GM12878 (cell line): ENCODE measurements at regions of chr12 and their contacts with region 1.

Region 1: GRCh38 chr12:49232940-49233841 is 31.7 kb upstream of the TUBA1C start:
- DNase-seq: no peak
- ATAC-seq: no peak
- H3K4me3 ChIP-seq: peak overlapping the region; percentile 4; the same call in 1 of the 2 replicates
- H3K27ac ChIP-seq: no peak overlapping the region
- H3K4me1 ChIP-seq: peaks cover 3% of the 10 kb centered on the region; the same call in 1 of the 2 replicates
- H3K27me3 ChIP-seq: no peaks in the 10 kb centered on the region
- CTCF ChIP-seq: no peak
- EP300 ChIP-seq: no peak
- POLR2A ChIP-seq: no peak
- RAD21 ChIP-seq: no peak

Region 2: DNA sequence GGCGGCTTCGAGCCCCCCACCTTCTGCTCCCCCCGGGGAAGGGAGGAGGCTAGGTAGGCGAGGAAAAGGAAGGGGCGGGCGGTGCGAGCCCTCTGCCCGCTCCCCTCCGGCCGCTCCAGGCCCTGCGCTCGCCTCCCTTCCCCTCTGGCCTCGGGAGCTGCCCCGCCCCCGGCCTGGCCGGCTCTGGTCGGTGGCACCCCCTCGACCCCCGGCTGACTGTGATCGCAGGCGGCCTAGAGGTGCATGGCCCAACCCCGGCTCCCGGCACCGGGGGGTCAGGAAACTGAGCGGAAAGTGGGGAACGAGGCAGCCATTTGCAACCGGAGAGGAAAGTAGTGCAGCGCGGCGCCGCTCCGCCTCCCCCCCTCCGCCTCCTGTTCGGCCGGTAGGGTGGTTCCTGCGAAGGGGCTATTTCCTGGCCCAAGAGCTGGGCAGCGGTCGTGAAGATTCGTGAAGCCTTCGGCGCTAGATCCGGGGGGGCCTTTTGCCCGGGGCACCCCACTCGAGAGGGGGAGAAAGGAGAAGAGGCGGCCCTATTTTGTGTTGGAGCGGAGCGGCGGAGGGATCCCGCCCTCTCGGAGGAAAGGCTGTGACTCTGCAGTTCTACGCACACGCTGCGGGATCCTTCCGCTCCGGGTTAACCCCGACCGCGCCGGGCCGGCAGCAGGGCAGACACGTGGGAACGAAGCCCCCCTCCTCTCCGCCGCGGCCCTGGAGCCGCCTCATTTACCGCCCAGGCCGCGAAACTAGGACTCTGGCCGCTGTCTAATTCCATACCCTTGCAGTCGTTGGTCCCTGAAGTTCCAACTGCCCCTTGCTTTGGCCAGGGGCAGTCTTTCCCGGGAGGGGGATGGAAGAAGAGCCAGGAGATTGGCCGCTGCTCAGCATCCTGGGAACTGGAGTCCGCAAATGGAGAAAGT is 172.7 kb before region 1 on chr12 and contains the start of gene KMT2D:
- CTCF ChIA-PET with region 1: interaction called, 17 read pairs
- POLR2A ChIA-PET with region 1: interaction called, 6 read pairs
- RAD21 ChIA-PET with region 1: interaction called, 6 read pairs
- SMC1A ChIA-PET with region 1: interaction called, 8 read pairs
- in situ Hi-C with region 1: loop called (anchors 10 kb)
- intact Hi-C with region 1: loop called (anchors 1 kb)
- DNase-seq: peak; percentile 59
- ATAC-seq: peak; percentile 78
- H3K4me3 ChIP-seq: peak within 1 kb of the TSS; percentile 99
- H3K27ac ChIP-seq: peak within 1 kb of the TSS; percentile 99
- H3K4me1 ChIP-seq: peaks cover 6% of the 10 kb centered on the region
- H3K27me3 ChIP-seq: no peaks in the 10 kb centered on the region
- CTCF ChIP-seq: peak in 1 of 3 experiments; percentile 28; a peak in 1 of 6 replicates
- EP300 ChIP-seq: peak in 1 of 2 experiments; percentile 66; a peak in 1 of 4 replicates
- POLR2A ChIP-seq: peak; percentile 80
- RAD21 ChIP-seq: no peak
- polyA plus RNA-seq, gene KMT2D: 0.51 to 1.2 TPM

Region 3: DNA sequence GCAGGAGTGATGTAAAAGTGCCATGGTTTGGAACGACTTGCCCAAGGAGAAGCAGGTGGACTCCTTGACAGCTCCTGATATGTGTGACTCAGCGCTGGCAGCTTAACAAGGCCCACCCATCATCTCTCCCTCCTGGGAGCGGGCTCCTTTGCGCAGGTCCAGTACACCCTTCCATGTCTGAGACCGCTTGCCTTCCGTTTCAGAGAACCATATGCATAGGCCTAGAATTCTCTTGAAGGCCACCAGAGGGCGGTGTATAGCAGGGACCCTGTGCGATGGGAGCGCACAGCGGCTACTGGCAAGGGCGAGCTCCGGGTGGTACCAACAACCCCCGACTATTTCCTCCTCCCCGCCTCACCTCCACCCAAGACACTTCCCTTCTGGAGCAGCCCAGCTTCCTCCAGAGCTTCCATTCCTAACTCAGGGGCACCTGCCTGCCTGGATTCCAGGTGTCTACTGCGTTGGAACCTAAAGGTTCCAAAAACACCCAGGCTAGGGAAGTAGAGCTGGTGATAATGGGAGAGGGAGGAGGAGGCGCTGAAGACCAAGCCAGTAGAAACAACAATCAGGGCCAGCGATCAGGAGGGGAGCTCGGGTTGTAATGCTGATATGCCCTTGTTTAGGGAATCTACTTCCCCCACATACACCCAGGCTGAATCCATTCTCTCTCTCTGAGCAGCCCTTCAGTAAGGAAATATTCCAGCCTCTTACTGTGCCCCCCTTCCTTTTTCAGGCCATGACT is 144.8 kb before region 1 on chr12:
- CTCF ChIA-PET with region 1: interaction called, 47 read pairs
- POLR2A ChIA-PET with region 1: interaction called, 6 read pairs
- RAD21 ChIA-PET with region 1: interaction called, 11 read pairs
- SMC1A ChIA-PET with region 1: interaction called, 17 read pairs
- in situ Hi-C with region 1: no loop called
- intact Hi-C with region 1: loop called (anchors 1 kb)
- DNase-seq: peak; percentile 44
- ATAC-seq: peak; percentile 96
- H3K4me3 ChIP-seq: 0 out of 2 replicates have a peak overlapping the region, but pooled peaks have one; percentile 5
- H3K27ac ChIP-seq: no peak overlapping the region
- H3K4me1 ChIP-seq: peaks cover 3% of the 10 kb centered on the region; the same call in 1 of the 2 replicates
- H3K27me3 ChIP-seq: peaks cover 27 to 35% of the 10 kb centered on the region in 2 experiments; a peak in 3 of 4 replicates
- CTCF ChIP-seq: peak; percentile 92 to 95 (median 94)
- EP300 ChIP-seq: no peak
- POLR2A ChIP-seq: peak; percentile 31; the same call in 1 of the 2 replicates
- RAD21 ChIP-seq: peak; percentile 76

Region 4: DNA sequence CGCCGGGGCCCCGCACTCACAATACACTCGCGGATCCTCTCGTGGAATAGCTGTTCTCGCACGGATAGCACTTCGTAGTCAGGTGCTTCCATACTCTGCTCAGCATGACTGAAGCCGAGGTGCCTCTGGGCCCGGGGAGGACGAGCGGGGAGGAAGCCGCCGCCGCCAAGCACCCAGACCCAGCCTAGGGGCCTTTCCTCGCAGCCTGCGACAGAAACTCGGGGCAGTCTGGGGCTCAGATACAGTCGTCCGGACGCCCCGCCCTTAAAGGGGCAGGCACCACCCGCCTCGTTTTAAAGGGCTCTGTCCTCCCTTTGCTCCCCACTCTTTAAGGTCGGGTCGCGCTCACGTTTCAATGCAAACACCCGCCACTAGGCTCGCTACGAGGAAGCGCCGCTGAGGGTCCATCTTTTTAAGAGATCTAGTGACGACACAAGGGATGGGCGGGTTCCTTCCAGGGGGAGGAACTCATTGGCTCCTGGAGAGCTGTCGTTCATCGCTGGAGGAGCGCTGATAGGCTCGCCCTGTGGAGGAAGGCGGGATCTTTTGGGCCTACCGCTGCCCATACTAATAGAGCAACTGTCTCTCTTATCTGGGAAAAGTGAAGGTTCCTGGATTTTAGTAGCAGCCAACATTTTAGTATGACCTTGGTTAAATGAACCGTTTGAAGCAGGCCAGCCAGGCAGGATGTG is 122.6 kb before region 1 on chr12 and contains the start of gene LMBR1L:
- CTCF ChIA-PET with region 1: interaction called, 13 read pairs
- POLR2A ChIA-PET with region 1: no interaction called
- RAD21 ChIA-PET with region 1: interaction called, 5 read pairs
- SMC1A ChIA-PET with region 1: no interaction called
- in situ Hi-C with region 1: no loop called
- intact Hi-C with region 1: no loop called
- DNase-seq: peak; percentile 93
- ATAC-seq: peak; percentile 98
- H3K4me3 ChIP-seq: peak within 1 kb of the TSS; percentile 87
- H3K27ac ChIP-seq: peak within 1 kb of the TSS; percentile 70
- H3K4me1 ChIP-seq: peaks cover 9% of the 10 kb centered on the region
- H3K27me3 ChIP-seq: no peaks in the 10 kb centered on the region
- CTCF ChIP-seq: peak; percentile 36 to 60 (median 50); a peak in 5 of 6 replicates
- EP300 ChIP-seq: no peak
- POLR2A ChIP-seq: peak; percentile 91
- RAD21 ChIP-seq: 0 out of 2 replicates have a peak, but pooled peaks have one; percentile 32
- polyA plus RNA-seq, gene LMBR1L: 2.1 to 2.8 TPM

Region 5: DNA sequence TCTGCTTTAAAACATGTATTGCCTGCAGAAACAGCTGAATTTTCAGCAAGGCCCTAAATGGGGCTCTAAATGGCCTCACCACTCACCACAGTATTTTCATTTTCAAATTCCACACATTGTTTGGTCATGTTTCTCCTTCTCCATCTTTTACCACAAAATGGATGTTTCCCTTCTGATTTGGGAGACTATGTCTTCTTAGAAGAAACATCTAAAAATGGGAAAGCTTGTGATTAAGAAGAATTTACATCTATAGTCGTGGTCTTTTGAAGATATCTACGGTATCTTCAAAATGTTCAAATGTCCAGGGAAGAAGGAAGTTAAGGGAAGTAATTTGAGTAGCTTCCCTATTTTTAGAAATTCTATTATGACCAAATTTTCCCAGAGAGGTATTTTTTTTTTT is 11.0 kb after region 1 on chr12:
- CTCF ChIA-PET with region 1: interaction called, 16 read pairs
- POLR2A ChIA-PET with region 1: interaction called, 3 read pairs
- RAD21 ChIA-PET with region 1: interaction called, 4 read pairs
- SMC1A ChIA-PET with region 1: no interaction called
- in situ Hi-C with region 1: no loop called
- intact Hi-C with region 1: no loop called
- DNase-seq: no peak
- ATAC-seq: no peak
- H3K4me3 ChIP-seq: no peak overlapping the region
- H3K27ac ChIP-seq: no peak overlapping the region
- H3K4me1 ChIP-seq: no peaks in the 10 kb centered on the region
- H3K27me3 ChIP-seq: no peaks in the 10 kb centered on the region
- CTCF ChIP-seq: no peak
- EP300 ChIP-seq: no peak
- POLR2A ChIP-seq: no peak
- RAD21 ChIP-seq: no peak